Endothelial cell of umbilical vein (primary cell): ENCODE measurements at regions of chr10 and their contacts with region 1.

Region 1: GRCh38 chr10:26725837-26726727 is 28.6 kb downstream of the PDSS1 start:
- DNase-seq: peak; percentile 69
- H3K4me3 ChIP-seq: no peak overlapping the region
- H3K27ac ChIP-seq: no peak overlapping the region
- H3K4me1 ChIP-seq: no peaks in the 10 kb centered on the region
- H3K27me3 ChIP-seq: no peaks in the 10 kb centered on the region
- CTCF ChIP-seq: peak; percentile 65 to 73
- POLR2A ChIP-seq: no peak

Region 2: GRCh38 chr10:26448706-26449435 is 277.2 kb before region 1 on chr10:
- CTCF ChIA-PET with region 1: no interaction called
- POLR2A ChIA-PET with region 1: no interaction called
- dilution Hi-C with region 1: no loop called
- intact Hi-C with region 1: no loop called
- DNase-seq: no peak
- H3K4me3 ChIP-seq: no peak overlapping the region
- H3K27ac ChIP-seq: no peak overlapping the region
- H3K4me1 ChIP-seq: no peaks in the 10 kb centered on the region
- H3K27me3 ChIP-seq: no peaks in the 10 kb centered on the region
- CTCF ChIP-seq: no peak
- POLR2A ChIP-seq: no peak

Region 3: DNA sequence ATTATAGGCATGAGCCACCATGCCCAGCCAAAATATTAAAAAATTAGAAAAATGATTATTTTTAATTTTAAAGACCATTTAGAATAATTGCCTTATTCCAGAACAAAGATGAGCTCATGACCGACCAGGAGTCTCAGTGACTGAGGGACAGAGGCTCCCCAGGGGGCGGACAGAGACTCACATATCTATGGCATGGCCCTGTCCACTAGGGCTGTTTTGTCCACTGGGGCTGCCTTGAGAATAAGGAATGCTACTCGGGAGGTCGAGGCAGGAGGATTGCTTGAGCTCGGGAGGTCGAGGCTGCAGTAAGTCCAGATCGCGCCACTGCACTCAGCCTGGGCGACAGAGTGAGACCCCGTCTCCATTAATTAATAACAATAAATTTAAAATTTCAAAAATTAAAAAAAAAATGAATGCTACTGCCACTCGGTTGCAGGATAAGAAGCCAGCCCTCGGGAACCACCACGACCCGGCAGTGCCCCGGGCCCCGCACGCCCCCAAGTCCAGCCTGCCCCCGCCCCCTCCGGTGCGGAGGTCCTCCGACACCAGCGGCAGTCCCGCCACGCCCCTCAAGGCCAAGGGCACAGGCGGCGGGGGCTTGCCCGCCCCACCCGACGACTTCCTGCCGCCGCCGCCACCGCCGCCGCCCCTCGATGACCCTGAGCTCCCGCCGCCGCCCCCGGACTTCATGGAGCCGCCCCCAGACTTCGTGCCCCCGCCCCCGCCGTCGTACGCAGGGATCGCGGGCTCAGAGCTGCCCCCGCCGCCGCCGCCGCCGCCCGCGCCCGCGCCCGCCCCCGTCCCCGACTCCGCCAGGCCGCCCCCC is 159.3 kb before region 1 on chr10:
- CTCF ChIA-PET with region 1: no interaction called
- POLR2A ChIA-PET with region 1: no interaction called
- dilution Hi-C with region 1: no loop called
- intact Hi-C with region 1: no loop called
- DNase-seq: no peak
- H3K4me3 ChIP-seq: peak overlapping the region in 1 of 3 experiments; percentile 30
- H3K27ac ChIP-seq: no peak overlapping the region
- H3K4me1 ChIP-seq: no peaks in the 10 kb centered on the region
- H3K27me3 ChIP-seq: peaks cover 4 to 19% of the 10 kb centered on the region in 2 experiments
- CTCF ChIP-seq: no peak
- POLR2A ChIP-seq: no peak

Region 4: GRCh38 chr10:26706206-26706605 is 19.9 kb before region 1 on chr10:
- CTCF ChIA-PET with region 1: interaction called, 11 read pairs
- POLR2A ChIA-PET with region 1: no interaction called
- dilution Hi-C with region 1: no loop called
- intact Hi-C with region 1: no loop called
- DNase-seq: no peak
- H3K4me3 ChIP-seq: no peak overlapping the region
- H3K27ac ChIP-seq: no peak overlapping the region
- H3K4me1 ChIP-seq: no peaks in the 10 kb centered on the region
- H3K27me3 ChIP-seq: no peaks in the 10 kb centered on the region
- CTCF ChIP-seq: no peak
- POLR2A ChIP-seq: no peak

Region 5: DNA sequence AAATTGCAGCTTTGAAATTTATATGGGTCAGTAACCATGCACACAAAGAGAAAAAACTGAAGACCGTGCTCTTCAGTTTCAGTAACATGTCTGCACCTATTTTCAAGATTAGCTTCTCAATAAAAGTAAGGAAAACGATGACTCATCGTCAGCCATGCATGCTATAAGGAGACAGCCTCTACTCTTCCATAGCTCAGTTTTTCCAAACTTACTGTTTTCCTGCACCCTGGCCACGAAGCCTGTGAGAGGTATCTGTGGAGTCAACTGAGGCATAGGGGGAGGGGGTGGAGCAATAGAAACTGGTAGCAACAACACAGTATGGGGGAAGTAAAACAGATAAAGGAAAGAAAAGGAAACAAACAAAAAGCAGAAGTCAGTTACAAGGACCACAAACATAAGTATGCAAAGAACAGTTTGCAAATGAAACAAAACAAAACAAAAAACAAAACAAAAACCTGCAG is 29.4 kb after region 1 on chr10:
- CTCF ChIA-PET with region 1: interaction called, 16 read pairs
- POLR2A ChIA-PET with region 1: no interaction called
- dilution Hi-C with region 1: no loop called
- intact Hi-C with region 1: no loop called
- DNase-seq: peak; percentile 43
- H3K4me3 ChIP-seq: no peak overlapping the region
- H3K27ac ChIP-seq: no peak overlapping the region
- H3K4me1 ChIP-seq: no peaks in the 10 kb centered on the region
- H3K27me3 ChIP-seq: no peaks in the 10 kb centered on the region
- CTCF ChIP-seq: no peak
- POLR2A ChIP-seq: no peak

Region 6: DNA sequence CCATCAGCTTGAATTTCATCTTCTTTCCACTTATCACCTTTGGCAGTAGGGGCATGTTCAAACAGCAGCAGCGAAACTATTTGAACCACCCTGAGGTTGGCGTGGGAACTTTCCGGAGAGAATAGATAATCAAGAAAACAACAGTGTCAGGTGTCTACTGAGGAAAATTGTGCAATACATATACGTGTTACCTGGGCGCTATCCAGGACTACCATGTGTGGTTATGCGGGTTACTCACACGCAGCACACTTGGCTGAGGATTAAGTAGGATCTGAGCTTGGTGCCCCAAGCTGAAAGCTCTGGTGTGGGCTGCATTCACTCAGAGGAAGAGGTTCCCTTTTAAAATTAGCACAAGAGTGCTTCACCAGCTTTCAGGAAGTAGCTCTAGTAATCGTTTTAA is 143.4 kb after region 1 on chr10:
- CTCF ChIA-PET with region 1: interaction called, 35 read pairs
- POLR2A ChIA-PET with region 1: no interaction called
- dilution Hi-C with region 1: no loop called
- intact Hi-C with region 1: no loop called
- DNase-seq: no peak
- H3K4me3 ChIP-seq: no peak overlapping the region
- H3K27ac ChIP-seq: no peak overlapping the region
- H3K4me1 ChIP-seq: no peaks in the 10 kb centered on the region
- H3K27me3 ChIP-seq: peaks cover 6 to 11% of the 10 kb centered on the region in 2 experiments
- CTCF ChIP-seq: no peak
- POLR2A ChIP-seq: no peak

Region 7: DNA sequence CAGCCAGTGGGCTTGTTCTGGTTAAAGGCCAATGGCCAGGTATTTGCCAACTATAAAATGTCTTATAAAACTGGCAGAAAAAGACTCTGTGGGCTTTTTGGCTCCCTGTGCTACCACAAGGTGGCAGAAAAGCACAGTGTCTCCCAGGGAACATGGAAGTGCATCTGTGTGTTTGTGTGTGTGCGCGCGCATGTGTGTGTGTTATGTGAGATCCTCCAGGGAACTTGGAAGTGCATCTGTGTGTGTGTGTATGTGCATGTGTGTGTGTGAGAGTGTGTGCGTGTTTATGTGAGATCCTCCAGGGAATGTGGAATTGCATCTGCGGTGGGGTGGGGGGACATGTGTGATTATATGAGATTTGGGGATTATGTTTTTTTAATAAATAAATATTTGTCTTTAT is 164.9 kb after region 1 on chr10:
- CTCF ChIA-PET with region 1: interaction called, 10 read pairs
- POLR2A ChIA-PET with region 1: no interaction called
- dilution Hi-C with region 1: no loop called
- intact Hi-C with region 1: no loop called
- DNase-seq: peak; percentile 66
- H3K4me3 ChIP-seq: no peak overlapping the region
- H3K27ac ChIP-seq: no peak overlapping the region
- H3K4me1 ChIP-seq: no peaks in the 10 kb centered on the region
- H3K27me3 ChIP-seq: peaks cover 0 to 2% of the 10 kb centered on the region in 2 experiments
- CTCF ChIP-seq: peak; percentile 54 to 68
- POLR2A ChIP-seq: no peak

Region 8: GRCh38 chr10:28266449-28267224 is 1540.6 kb after region 1 on chr10:
- CTCF ChIA-PET with region 1: no interaction called
- POLR2A ChIA-PET with region 1: no interaction called
- dilution Hi-C with region 1: no loop called
- intact Hi-C with region 1: no loop called
- DNase-seq: no peak
- H3K4me3 ChIP-seq: no peak overlapping the region
- H3K27ac ChIP-seq: no peak overlapping the region
- H3K4me1 ChIP-seq: no peaks in the 10 kb centered on the region
- H3K27me3 ChIP-seq: no peaks in the 10 kb centered on the region
- CTCF ChIP-seq: no peak
- POLR2A ChIP-seq: no peak